Aorta (tissue), 5 donors: ENCODE measurements at regions of chr1 and their contacts with region 1.

Region 1: GRCh38 chr1:36126797-36127500 is 1.9 kb upstream of the COL8A2 start:
- DNase-seq: no peak
- ATAC-seq: no peak
- H3K4me3 ChIP-seq: no peak overlapping the region
- H3K27ac ChIP-seq: no peak overlapping the region
- H3K4me1 ChIP-seq: no peaks in the 10 kb centered on the region
- H3K27me3 ChIP-seq: no peaks in the 10 kb centered on the region

Region 2: GRCh38 chr1:35641233-35641866 is 485.6 kb before region 1 on chr1 and contains the start of gene PSMB2:
- intact Hi-C with region 1: no loop called
- DNase-seq: peak; percentile 97 to 99
- ATAC-seq: peak; percentile 98
- H3K4me3 ChIP-seq: peak within 1 kb of the TSS; percentile 87 to 97
- H3K27ac ChIP-seq: peak within 1 kb of the TSS; percentile 25 to 90
- H3K4me1 ChIP-seq: no peaks in the 10 kb centered on the region
- H3K27me3 ChIP-seq: no peaks in the 10 kb centered on the region
- total RNA-seq, gene PSMB2: 35.9 to 36.2 TPM

Region 3: DNA sequence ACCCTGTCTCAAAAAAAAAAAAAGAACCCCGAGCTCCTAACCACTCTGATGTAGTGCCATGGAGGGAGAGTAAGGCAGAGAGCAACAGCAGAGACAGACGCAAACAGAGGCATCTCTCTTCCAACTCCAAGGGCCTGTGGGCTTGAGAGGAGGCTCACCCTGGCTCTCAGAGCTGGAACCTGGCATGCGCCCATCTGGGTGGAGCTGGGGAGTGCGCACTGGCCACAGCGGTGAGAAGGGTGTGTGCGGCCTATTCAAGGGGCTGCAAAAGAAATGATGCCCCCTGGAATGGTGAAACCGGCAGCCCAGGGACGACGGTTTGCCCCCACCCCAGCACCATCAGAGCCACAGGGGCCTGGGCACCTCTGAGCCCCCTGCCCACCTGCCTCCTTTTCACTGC is 19.6 kb before region 1 on chr1:
- intact Hi-C with region 1: loop called in 1 of 2 experiments (anchors 2 kb)
- DNase-seq: no peak
- ATAC-seq: no peak
- H3K4me3 ChIP-seq: no peak overlapping the region
- H3K27ac ChIP-seq: no peak overlapping the region
- H3K4me1 ChIP-seq: no peaks in the 10 kb centered on the region
- H3K27me3 ChIP-seq: no peaks in the 10 kb centered on the region

Region 4: DNA sequence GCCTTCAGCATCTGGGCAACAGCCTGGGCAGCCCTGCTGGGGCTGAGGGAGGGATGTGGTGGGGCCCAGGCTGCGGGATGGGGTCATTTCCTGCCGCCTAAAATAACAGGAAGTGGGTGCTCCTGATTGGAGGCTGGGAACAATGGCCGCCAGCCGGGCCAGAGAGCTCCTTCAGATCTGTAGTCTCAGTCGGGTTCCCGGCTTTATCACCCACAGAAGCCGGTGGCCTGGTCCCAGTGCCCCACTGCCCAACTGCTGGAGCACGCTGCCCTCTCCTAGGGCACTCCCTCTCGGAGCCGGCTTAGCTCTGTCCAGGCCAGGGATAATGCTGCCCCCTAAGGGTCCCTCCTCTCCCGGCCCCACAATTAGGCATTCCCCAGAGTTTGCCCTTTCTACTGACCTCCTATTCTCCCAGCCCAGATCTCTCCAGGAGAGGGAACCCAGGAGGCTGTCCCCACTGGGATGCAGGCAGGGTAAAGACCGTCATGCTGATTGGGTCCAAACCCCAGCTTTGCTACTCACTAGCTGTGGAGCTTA is 34.1 kb after region 1 on chr1:
- intact Hi-C with region 1: no loop called
- DNase-seq: peak; percentile 86 to 88
- ATAC-seq: peak; percentile 63
- H3K4me3 ChIP-seq: no peak overlapping the region
- H3K27ac ChIP-seq: peak overlapping the region; percentile 36 to 84
- H3K4me1 ChIP-seq: peaks cover 0 to 5% of the 10 kb centered on the region in 2 donors
- H3K27me3 ChIP-seq: no peaks in the 10 kb centered on the region